SK-N-SH (cell line): ENCODE measurements at regions of chr11 and their contacts with region 1.

Region 1: DNA sequence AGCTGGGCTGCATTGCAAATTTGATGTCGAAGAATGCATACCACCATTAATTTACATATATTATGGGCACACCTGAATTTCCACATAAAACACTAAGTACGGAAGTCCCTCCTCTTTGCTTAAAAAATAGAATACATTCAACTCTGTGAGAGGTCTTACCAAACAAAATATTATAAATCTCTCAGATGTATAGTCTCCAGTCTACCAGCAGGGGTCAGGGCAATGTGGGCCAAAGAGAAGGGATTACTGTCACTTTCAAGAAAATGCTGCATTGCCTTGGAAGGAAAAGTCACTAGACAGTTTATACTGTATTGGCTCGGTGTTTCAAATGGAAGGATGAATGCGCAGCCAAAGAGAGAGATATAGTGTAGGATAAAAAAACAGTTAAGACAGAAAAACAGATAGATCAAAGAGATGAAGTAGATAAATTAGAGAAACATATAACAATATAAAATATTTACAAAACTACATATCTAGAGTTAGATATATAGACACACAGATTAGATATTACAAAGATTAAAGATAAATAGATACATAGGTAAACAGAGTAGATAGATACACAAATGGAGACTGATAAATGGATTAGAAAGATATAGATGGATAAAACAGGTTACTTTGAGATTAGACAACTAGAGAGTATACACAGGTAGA is 20.9 kb downstream of the SERGEF start:
- DNase-seq: peak; percentile 66
- H3K4me3 ChIP-seq: no peak overlapping the region; a peak in 1 of 4 replicates
- H3K27ac ChIP-seq: no peak overlapping the region
- H3K4me1 ChIP-seq: no peaks in the 10 kb centered on the region
- H3K27me3 ChIP-seq: no peaks in the 10 kb centered on the region
- CTCF ChIP-seq: peak; percentile 93
- EP300 ChIP-seq: no peak
- RAD21 ChIP-seq: peak; percentile 78

Region 2: GRCh38 chr11:18005376-18006129 is 13.6 kb after region 1 on chr11:
- CTCF ChIA-PET with region 1: interaction called, 19 read pairs
- POLR2A ChIA-PET with region 1: no interaction called
- DNase-seq: no peak
- H3K4me3 ChIP-seq: no peak overlapping the region
- H3K27ac ChIP-seq: no peak overlapping the region
- H3K4me1 ChIP-seq: no peaks in the 10 kb centered on the region
- H3K27me3 ChIP-seq: no peaks in the 10 kb centered on the region
- CTCF ChIP-seq: no peak
- EP300 ChIP-seq: no peak
- RAD21 ChIP-seq: no peak

Region 3: GRCh38 chr11:18012863-18013781 is 21.2 kb after region 1 on chr11 and contains the start of gene SERGEF:
- CTCF ChIA-PET with region 1: interaction called, 19 read pairs
- POLR2A ChIA-PET with region 1: no interaction called
- DNase-seq: peak; percentile 94
- H3K4me3 ChIP-seq: peak within 1 kb of the TSS; percentile 85 to 96
- H3K27ac ChIP-seq: peak within 1 kb of the TSS in 1 of 2 experiments; percentile 73; a peak in 2 of 4 replicates
- H3K4me1 ChIP-seq: peaks cover 0 to 13% of the 10 kb centered on the region in 2 experiments; a peak in 1 of 4 replicates
- H3K27me3 ChIP-seq: no peaks in the 10 kb centered on the region
- CTCF ChIP-seq: no peak
- EP300 ChIP-seq: no peak
- RAD21 ChIP-seq: no peak
- polyA plus RNA-seq, gene SERGEF: 20.6 and 23.1 TPM in 2 replicates

Region 4: GRCh38 chr11:18105802-18106574 is 114.1 kb after region 1 on chr11 and contains the start of gene SAAL1:
- CTCF ChIA-PET with region 1: interaction called, 15 read pairs
- POLR2A ChIA-PET with region 1: no interaction called
- DNase-seq: peak; percentile 98
- H3K4me3 ChIP-seq: peak within 1 kb of the TSS; percentile 87 to 88
- H3K27ac ChIP-seq: peak within 1 kb of the TSS; percentile 18 to 51; a peak in 1 of 4 replicates
- H3K4me1 ChIP-seq: peaks cover 0 to 9% of the 10 kb centered on the region in 2 experiments; a peak in 2 of 4 replicates
- H3K27me3 ChIP-seq: no peaks in the 10 kb centered on the region
- CTCF ChIP-seq: peak; percentile 86
- EP300 ChIP-seq: no peak; a peak in 1 of 4 replicates
- RAD21 ChIP-seq: 0 out of 2 replicates have a peak, but pooled peaks have one; percentile 26
- polyA plus RNA-seq, gene SAAL1: 17.9 and 19.6 TPM in 2 replicates